GM12878 (cell line): ENCODE measurements at regions of chr16 and their contacts with region 1.

Region 1: GRCh38 chr16:11783319-11784037 is 13.6 kb downstream of the ZC3H7A start:
- DNase-seq: peak; percentile 89
- ATAC-seq: peak; percentile 71
- H3K4me3 ChIP-seq: peak overlapping the region; percentile 67
- H3K27ac ChIP-seq: peak overlapping the region; percentile 99
- H3K4me1 ChIP-seq: peaks cover 34% of the 10 kb centered on the region
- H3K27me3 ChIP-seq: no peaks in the 10 kb centered on the region
- CTCF ChIP-seq: no peak
- EP300 ChIP-seq: peak; percentile 88 to 90
- POLR2A ChIP-seq: peak; percentile 61
- RAD21 ChIP-seq: no peak

Region 2: DNA sequence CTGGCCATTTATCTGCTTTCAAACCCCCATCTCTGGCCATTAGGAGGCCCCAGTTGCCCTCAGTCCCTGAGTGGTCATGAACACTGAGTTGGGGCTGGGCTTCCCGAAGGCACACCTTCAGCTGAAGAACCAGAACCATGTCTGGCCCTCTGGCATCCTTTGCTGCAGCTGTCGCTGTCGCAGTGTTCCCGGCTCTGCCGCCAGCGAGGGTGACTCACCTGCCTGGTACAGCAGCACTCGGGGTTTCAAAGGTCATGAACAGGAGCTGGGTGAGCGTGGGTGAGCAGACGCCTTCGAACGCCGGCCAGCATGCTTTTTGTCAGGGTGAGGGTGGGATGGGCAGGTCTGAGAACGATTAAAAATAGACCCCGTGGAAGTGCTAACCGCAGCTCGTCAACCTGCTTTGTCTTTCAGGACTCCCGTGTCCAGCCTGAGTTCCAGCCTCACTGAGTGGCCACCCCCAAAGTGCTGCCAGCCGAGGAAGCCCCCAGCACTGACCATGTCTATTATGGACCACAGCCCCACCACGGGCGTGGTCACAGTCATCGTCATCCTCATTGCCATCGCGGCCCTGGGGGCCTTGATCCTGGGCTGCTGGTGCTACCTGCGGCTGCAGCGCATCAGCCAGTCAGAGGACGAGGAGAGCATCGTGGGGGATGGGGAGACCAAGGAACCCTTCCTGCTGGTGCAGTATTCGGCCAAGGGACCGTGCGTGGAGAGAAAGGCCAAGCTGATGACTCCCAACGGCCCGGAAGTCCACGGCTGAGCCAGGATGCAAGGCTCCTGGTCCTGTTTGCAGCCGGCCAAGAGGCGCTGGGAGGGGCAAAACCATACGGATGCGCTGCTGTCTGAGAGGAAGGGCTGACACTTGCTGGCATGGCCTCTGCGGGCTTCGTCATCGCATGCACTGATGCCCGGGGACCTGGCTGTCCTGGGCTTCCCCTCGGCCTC is 107.6 kb before region 1 on chr16:
- CTCF ChIA-PET with region 1: no interaction called
- POLR2A ChIA-PET with region 1: interaction called, 11 read pairs
- RAD21 ChIA-PET with region 1: interaction called, 4 read pairs
- SMC1A ChIA-PET with region 1: no interaction called
- in situ Hi-C with region 1: no loop called
- intact Hi-C with region 1: no loop called
- DNase-seq: no peak
- ATAC-seq: no peak
- H3K4me3 ChIP-seq: no peak overlapping the region
- H3K27ac ChIP-seq: no peak overlapping the region
- H3K4me1 ChIP-seq: peaks cover 71% of the 10 kb centered on the region
- H3K27me3 ChIP-seq: no peaks in the 10 kb centered on the region
- CTCF ChIP-seq: no peak
- EP300 ChIP-seq: no peak
- POLR2A ChIP-seq: 0 out of 2 replicates have a peak, but pooled peaks have one; percentile 2
- RAD21 ChIP-seq: no peak

Region 3: GRCh38 chr16:11768849-11769248 is 14.6 kb before region 1 on chr16:
- CTCF ChIA-PET with region 1: interaction called, 14 read pairs
- POLR2A ChIA-PET with region 1: interaction called, 23 read pairs
- RAD21 ChIA-PET with region 1: interaction called, 34 read pairs
- SMC1A ChIA-PET with region 1: interaction called, 58 read pairs
- in situ Hi-C with region 1: no loop called
- intact Hi-C with region 1: no loop called
- DNase-seq: peak; percentile 58
- ATAC-seq: peak; percentile 80
- H3K4me3 ChIP-seq: peak overlapping the region; percentile 53
- H3K27ac ChIP-seq: peak overlapping the region; percentile 60
- H3K4me1 ChIP-seq: peaks cover 42% of the 10 kb centered on the region
- H3K27me3 ChIP-seq: no peaks in the 10 kb centered on the region
- CTCF ChIP-seq: no peak
- EP300 ChIP-seq: 0 out of 4 replicates have a peak, but pooled peaks of 1 of the 2 experiments have one; percentile 6
- POLR2A ChIP-seq: no peak
- RAD21 ChIP-seq: no peak

Region 4: DNA sequence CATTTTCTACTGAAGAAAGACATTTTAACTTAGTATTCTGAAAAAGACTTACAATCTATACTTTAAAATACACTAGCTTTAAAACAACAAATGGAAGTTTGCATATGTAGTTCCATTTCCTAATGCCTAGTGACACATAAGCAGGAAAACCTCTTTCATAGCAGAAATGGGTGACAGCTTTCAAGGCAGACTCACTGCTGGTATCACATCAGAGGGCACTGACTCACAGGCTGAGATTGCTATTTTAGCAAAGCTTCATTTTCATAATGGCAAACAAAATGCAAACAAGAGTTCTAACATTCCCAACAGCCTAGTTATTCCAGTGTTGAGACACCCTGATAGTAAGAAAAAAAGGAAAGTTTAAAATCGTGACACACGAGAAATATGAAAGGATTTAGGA is 113.3 kb after region 1 on chr16:
- CTCF ChIA-PET with region 1: no interaction called
- POLR2A ChIA-PET with region 1: no interaction called
- RAD21 ChIA-PET with region 1: no interaction called
- SMC1A ChIA-PET with region 1: no interaction called
- in situ Hi-C with region 1: no loop called
- intact Hi-C with region 1: no loop called
- DNase-seq: no peak
- ATAC-seq: no peak
- H3K4me3 ChIP-seq: no peak overlapping the region
- H3K27ac ChIP-seq: no peak overlapping the region
- H3K4me1 ChIP-seq: no peaks in the 10 kb centered on the region
- H3K27me3 ChIP-seq: no peaks in the 10 kb centered on the region
- CTCF ChIP-seq: no peak
- EP300 ChIP-seq: no peak
- POLR2A ChIP-seq: no peak
- RAD21 ChIP-seq: no peak

Region 5: DNA sequence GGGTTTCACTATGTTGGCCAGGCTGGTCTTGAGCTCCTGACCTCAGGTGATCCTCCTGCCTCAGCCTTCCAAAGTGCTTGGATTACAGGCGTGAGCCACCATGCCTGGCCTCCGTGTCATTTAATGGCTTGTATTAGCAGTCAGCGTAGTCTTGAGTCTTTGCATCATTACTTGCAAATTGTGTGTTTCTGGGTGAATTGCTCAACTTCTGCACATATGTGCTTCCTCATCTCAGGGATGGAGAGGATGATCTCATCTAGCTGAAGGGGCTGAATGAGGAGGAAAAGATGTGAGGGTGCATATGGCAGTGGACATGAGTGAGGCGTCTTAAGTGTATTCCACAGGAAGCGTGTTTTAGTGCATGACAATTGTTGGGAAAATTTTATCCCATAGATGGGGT is 348.8 kb after region 1 on chr16:
- CTCF ChIA-PET with region 1: no interaction called
- POLR2A ChIA-PET with region 1: no interaction called
- RAD21 ChIA-PET with region 1: no interaction called
- SMC1A ChIA-PET with region 1: no interaction called
- in situ Hi-C with region 1: no loop called
- intact Hi-C with region 1: no loop called
- DNase-seq: no peak
- ATAC-seq: no peak
- H3K4me3 ChIP-seq: no peak overlapping the region
- H3K27ac ChIP-seq: no peak overlapping the region
- H3K4me1 ChIP-seq: no peaks in the 10 kb centered on the region
- H3K27me3 ChIP-seq: no peaks in the 10 kb centered on the region
- CTCF ChIP-seq: no peak
- EP300 ChIP-seq: no peak
- POLR2A ChIP-seq: no peak
- RAD21 ChIP-seq: no peak